ENCODE measurements at regions of chr18 and their contacts with region 1.

Region 1: GRCh38 chr18:2571200-2572143 is at the starts of genes METTL4 and NDC80:
- DNase-seq: peak; percentile 90 to 95
- ATAC-seq: peak; percentile 96
- H3K4me3 ChIP-seq: peak within 1 kb of the TSS; percentile 47 to 57
- H3K27ac ChIP-seq: peak within 1 kb of the TSS; percentile 68 to 96
- H3K4me1 ChIP-seq: peaks cover 0 to 3% of the 10 kb centered on the region in 2 donors
- H3K27me3 ChIP-seq: no peaks in the 10 kb centered on the region
- total RNA-seq, gene METTL4: 9.5 to 14.3 TPM
- total RNA-seq, gene NDC80: 0.29 to 2.4 TPM

Region 2: GRCh38 chr18:2641638-2642037 is 70.2 kb after region 1 on chr18:
- intact Hi-C with region 1: loop called in 1 of 2 experiments (anchors 10 kb)
- DNase-seq: no peak
- ATAC-seq: peak; percentile 47
- H3K4me3 ChIP-seq: no peak overlapping the region
- H3K27ac ChIP-seq: no peak overlapping the region
- H3K4me1 ChIP-seq: no peaks in the 10 kb centered on the region
- H3K27me3 ChIP-seq: no peaks in the 10 kb centered on the region

Region 3: DNA sequence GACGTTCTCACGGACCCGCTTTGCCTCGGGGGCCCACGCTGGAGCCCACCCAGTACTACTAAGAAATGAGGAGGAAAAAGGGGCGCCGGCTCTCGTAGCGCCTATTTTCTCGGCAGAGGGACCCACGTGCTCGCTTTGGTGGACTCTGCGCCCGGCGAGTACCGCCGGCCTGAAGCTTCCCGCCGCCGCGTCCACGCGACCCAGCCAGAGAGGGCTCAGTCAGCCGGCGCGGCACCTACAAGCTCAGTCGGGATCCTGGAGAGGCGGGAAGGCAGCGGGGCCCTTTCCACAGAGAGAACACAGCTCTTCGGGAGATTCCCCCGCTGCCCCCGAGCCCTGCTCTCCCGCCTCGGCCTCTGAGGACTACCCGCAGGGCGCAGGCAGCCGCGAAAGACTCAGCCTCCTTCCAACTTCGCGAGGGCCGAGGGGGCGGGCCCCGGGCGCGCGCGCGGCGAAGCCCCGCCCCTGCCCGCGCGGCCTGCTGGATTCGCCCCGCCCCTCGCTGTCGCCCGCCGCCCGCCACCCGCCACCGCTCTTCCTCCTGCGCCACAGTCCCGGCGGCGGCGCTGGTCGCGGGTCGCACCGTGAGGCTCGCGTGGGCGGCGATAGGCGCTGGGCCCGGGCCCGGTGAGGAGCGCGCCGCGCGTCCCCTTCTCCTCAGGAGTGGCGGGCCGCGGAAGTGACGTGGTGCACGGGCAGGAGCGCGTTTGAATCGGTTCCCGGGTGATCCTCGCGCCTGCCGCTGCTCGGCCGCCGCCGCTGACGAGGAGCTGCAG is 83.9 kb after region 1 on chr18 and contains the start of gene SMCHD1:
- intact Hi-C with region 1: loop called in 1 of 2 experiments (anchors 5 kb)
- DNase-seq: peak; percentile 93 to 97
- ATAC-seq: peak; percentile 94
- H3K4me3 ChIP-seq: peak within 1 kb of the TSS; percentile 87
- H3K27ac ChIP-seq: peak within 1 kb of the TSS; percentile 81 to 97
- H3K4me1 ChIP-seq: no peaks in the 10 kb centered on the region
- H3K27me3 ChIP-seq: no peaks in the 10 kb centered on the region
- total RNA-seq, gene SMCHD1: 71.0 to 88.9 TPM

Measured in aorta (tissue), 5 donors.